ENCODE measurements at regions of chr10 and their contacts with region 1.

Region 1: GRCh38 chr10:75399461-75400162 is 2.0 kb downstream of the ZNF503 start:
- DNase-seq: peak; percentile 38 to 83
- H3K4me3 ChIP-seq: peak overlapping the region; percentile 59
- H3K4me1 ChIP-seq: peaks cover 12% of the 10 kb centered on the region; the same call in 1 of the 2 replicates
- H3K27me3 ChIP-seq: peaks cover 4% of the 10 kb centered on the region; the same call in 1 of the 2 replicates

Region 2: GRCh38 chr10:74486659-74487058 is 913.0 kb before region 1 on chr10:
- in situ Hi-C with region 1: no loop called
- DNase-seq: no peak
- H3K4me3 ChIP-seq: no peak overlapping the region
- H3K4me1 ChIP-seq: no peaks in the 10 kb centered on the region
- H3K27me3 ChIP-seq: no peaks in the 10 kb centered on the region

Region 3: DNA sequence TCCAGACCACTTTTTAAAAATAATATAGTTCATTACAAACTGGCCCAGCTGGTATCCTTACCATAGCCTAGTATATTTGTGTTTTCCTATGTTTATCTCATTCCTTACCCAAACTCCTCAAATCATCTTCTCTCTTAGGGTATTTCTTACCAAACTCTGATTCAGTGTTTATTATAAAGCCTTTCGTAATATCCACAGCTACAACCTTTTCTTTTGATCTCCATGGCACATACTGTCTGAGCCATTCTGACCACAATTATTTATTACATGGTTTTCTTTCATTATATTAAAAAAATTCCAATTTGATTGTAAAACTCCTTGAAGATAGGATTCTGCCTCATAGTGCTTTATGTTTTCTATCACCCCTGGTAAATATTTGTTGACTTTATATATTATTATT is 126.0 kb after region 1 on chr10:
- in situ Hi-C with region 1: no loop called
- DNase-seq: no peak
- H3K4me3 ChIP-seq: no peak overlapping the region
- H3K4me1 ChIP-seq: no peaks in the 10 kb centered on the region
- H3K27me3 ChIP-seq: no peaks in the 10 kb centered on the region; the same call in 1 of the 2 replicates

Region 4: DNA sequence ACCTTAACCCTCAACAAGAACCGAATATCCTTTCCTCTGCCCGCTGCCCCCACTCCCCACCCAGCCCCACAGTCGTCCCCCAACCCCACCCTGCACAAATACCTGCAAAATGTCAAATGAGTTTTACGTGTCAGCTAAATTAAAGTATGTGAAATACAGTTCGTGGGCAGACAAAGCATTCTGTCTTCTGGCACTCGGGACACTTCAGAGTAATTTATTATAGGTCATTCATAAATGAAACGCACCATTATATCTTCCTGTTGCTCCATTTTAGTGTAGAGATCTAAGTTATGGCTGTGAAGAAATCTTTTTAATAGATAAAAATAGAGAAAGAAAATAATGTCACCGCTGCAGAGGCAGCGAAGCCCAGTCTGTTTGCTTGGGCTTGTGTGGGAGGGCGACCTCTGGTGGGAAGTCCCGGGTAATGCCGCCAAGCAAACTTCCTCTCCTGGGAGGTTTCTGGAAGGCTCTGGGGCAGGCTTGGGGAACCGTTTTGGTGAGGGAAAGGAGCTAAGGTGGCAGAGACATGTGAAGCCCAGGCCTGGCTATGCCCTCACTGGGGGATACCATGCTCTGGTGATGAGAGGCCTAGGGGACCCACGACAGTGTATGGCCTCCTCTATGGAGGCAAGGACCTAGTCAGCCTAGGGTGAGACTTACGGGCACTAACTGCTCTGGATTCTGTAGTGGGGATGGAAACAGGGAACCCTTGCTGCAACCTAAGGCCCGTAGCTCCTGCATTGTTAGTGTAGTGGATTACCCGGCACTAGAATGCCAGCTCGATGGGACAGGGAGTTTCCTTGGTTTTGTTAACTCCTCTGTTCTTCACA is 636.7 kb after region 1 on chr10:
- in situ Hi-C with region 1: loop called (anchors 25 kb)
- DNase-seq: peak; percentile 3 to 75
- H3K4me3 ChIP-seq: no peak overlapping the region
- H3K4me1 ChIP-seq: no peaks in the 10 kb centered on the region
- H3K27me3 ChIP-seq: no peaks in the 10 kb centered on the region

Measured in HAP-1 (cell line).